Gastrocnemius medialis (tissue), 4 donors: ENCODE measurements at regions of chr21 and their contacts with region 1.

Region 1: DNA sequence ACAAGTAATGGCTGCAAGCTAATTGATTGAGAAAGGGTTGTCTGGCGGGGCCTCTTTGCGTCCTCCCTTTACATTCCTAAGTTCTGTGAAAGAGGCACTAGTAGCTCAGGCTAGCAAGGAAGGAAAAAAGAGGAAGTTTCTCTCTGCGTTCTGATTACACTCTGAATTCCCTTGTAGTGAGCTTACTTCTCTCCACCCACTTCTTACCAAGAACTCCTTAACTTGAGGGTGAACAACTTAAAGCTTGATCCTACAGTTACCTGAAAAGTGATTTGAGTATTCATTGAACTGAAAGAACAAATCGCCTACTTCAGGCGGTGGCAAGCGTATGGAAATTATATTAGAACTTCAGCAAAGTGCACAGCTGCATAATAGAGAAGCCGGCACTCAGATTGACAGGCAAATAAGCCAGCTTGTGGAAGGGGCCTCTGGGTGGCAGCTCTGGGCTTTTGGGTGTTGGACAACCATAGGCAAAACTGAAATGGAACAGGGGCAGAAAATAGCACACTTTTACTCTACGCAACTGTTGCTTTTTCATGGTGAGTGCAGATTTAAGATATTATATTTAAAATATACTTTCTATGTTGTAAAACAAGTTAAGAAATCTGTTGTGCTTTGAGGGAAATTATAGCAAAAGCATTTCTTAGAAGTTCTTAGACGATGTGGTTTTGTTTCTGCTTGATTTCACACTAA is 464.5 kb downstream of the USP25 start:
- DNase-seq: peak; percentile 75 to 80
- ATAC-seq: peak; percentile 88 to 90
- H3K4me3 ChIP-seq: peak overlapping the region; percentile 52 to 63 (median 60)
- H3K27ac ChIP-seq: peak overlapping the region; percentile 83 to 88 (median 84)
- H3K4me1 ChIP-seq: peaks cover 14 to 17% of the 10 kb centered on the region in 2 donors
- H3K27me3 ChIP-seq: no peaks in the 10 kb centered on the region
- CTCF ChIP-seq: peak in 3 of 5 experiments; percentile 17 to 55 (median 44)
- POLR2A ChIP-seq: no peak

Region 2: DNA sequence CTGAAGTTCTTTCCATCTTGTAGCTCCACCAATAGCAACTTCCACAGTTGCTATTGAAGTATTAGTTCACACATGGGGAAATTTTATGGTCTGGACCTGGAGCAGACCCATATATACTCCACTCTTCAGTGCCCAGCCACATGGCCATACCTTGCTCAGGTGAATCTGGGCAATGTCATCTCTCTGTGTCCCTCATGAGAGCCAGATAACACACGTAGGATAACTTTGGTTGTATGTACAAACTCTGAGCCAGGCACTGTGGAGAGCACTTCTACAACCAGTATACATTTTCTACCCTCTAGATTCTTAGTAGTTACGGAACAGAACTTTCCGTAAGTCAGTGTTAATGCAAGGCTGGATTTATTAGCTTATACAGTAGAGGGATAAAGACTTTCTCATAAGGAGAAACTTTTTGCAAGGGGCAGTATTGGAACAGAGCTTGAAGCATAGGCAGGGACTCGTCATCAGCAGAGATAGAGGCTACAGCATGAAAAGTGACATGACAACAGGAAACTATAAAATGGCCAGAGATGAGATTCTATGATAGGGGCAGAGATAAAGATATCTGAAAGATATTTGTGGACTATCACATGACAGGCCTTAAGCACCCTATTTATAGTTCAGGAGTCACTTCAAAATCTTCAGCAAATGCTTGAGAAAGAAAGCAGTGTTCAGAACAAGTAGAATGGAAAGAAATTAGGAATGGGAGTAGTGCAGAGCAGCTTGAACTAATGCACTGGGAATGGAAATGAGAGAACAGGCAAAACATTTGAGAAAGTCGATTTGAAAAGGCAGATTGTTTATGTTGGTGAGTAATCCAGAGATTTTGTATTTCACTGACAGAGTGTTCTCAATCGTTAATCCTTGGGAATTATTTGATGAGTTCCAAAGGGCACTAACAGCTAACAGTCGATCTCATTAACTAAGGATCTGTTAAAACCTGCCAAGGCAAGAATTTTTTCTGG is 17.4 kb after region 1 on chr21:
- in situ Hi-C with region 1: no loop called
- intact Hi-C with region 1: loop called (anchors 2 kb)
- DNase-seq: no peak
- ATAC-seq: peak; percentile 86 to 92
- H3K4me3 ChIP-seq: peak overlapping the region; percentile 39 to 58 (median 48)
- H3K27ac ChIP-seq: peak overlapping the region; percentile 83 to 93 (median 87)
- H3K4me1 ChIP-seq: peaks cover 6 to 34% of the 10 kb centered on the region in 2 donors
- H3K27me3 ChIP-seq: no peaks in the 10 kb centered on the region
- CTCF ChIP-seq: no peak
- POLR2A ChIP-seq: peak in 1 of 2 donors; percentile 60

Region 3: GRCh38 chr21:16279731-16280581 is 85.7 kb after region 1 on chr21:
- in situ Hi-C with region 1: no loop called
- intact Hi-C with region 1: loop called (anchors 5 kb)
- DNase-seq: peak; percentile 30 to 51
- ATAC-seq: peak; percentile 68 to 86
- H3K4me3 ChIP-seq: peak overlapping the region; percentile 49 to 51 (median 50)
- H3K27ac ChIP-seq: peak overlapping the region; percentile 78 to 87 (median 82)
- H3K4me1 ChIP-seq: peaks cover 17 to 25% of the 10 kb centered on the region in 2 donors
- H3K27me3 ChIP-seq: no peaks in the 10 kb centered on the region
- CTCF ChIP-seq: peak in 2 of 5 experiments; percentile 12 to 24
- POLR2A ChIP-seq: no peak

Region 4: DNA sequence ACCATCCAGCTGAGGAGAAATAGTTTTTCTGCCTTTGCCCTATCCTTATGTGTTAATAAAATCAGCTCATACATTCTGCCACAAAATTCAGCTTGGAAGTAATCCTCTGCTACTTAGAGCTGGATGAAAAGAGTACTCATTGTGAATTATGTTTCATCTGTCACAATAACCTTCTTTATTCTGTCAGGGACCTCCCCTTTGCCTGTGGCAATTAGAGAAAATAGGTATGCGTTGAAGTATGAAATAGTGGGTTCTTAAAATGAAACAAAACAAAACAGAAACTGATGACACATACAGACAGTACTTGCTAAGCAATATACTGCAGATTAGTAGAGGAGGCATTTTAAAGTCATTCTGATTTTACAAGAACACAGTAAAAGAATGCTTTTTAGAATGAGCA is 114.0 kb after region 1 on chr21:
- in situ Hi-C with region 1: loop called in 3 of 4 experiments (anchors 5 to 10 kb)
- intact Hi-C with region 1: loop called (anchors 2 kb)
- DNase-seq: no peak
- ATAC-seq: peak in 1 of 2 donors; percentile 37
- H3K4me3 ChIP-seq: peak overlapping the region; percentile 45 to 52 (median 50)
- H3K27ac ChIP-seq: peak overlapping the region; percentile 63 to 85 (median 82)
- H3K4me1 ChIP-seq: peaks cover 5 to 9% of the 10 kb centered on the region in 2 donors
- H3K27me3 ChIP-seq: no peaks in the 10 kb centered on the region
- CTCF ChIP-seq: no peak
- POLR2A ChIP-seq: no peak

Region 5: DNA sequence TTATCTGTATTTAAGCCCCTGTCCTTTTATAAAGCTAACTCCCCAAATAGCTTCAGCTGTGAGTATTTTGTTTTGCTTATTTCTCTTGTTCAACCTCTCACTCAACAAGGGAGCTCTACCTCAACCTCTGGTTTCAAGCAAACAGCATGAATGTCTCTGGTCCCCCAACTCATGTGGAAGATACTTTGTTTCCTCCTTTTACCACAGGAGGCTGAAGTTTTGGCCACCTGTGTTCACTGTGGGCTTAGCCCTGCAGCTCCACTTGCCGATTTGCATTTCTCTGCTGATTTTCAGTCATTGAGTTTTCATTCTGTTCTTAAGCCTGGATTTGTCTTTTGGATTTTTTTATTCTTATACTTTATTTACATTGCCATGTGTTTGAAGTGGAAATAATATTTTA is 148.7 kb after region 1 on chr21:
- in situ Hi-C with region 1: no loop called
- intact Hi-C with region 1: no loop called
- DNase-seq: no peak
- ATAC-seq: no peak
- H3K4me3 ChIP-seq: no peak overlapping the region
- H3K27ac ChIP-seq: no peak overlapping the region
- H3K4me1 ChIP-seq: no peaks in the 10 kb centered on the region
- H3K27me3 ChIP-seq: no peaks in the 10 kb centered on the region
- CTCF ChIP-seq: no peak
- POLR2A ChIP-seq: no peak

Region 6: DNA sequence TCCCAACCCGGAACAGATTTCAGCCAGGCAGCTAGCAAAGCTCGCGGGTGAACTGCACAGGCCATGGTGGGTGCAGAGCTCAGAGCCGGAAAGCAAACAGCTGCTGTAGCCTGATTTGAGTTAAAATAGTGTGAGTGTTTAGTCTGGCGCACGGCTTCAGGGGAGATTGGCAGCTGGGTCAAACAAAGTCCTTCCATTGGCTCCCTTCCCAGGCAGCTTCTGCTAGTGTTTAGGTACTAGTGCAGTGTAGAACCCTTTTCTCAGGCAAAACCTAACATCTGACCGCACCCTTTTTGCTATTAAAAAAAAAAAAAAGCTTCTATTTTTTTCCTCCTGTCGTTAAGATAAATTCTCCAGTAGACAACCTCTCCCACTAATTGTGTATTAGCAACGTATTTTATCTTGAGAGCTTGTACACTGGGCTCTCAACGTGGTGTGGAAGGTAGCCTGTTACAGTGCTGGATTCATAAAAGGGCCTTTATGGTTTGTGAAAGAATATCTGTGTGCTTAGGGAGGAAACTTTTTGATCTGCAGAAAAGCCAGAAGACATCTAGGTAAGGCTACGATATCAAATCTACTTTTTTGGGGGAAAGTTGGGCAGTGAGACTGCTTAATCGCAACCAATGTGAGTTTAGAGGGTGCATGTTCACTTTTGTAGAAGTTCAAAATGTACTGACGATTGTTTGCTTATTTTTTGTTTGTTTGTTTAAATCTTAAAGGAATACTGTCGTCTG is 225.1 kb after region 1 on chr21:
- in situ Hi-C with region 1: loop called in 1 of 4 experiments (anchors 10 kb)
- intact Hi-C with region 1: loop called (anchors 5 kb)
- DNase-seq: peak; percentile 52 to 59
- ATAC-seq: peak; percentile 64 to 66
- H3K4me3 ChIP-seq: peak overlapping the region; percentile 51 to 60 (median 56)
- H3K27ac ChIP-seq: peak overlapping the region; percentile 86 to 91 (median 90)
- H3K4me1 ChIP-seq: peaks cover 4 to 15% of the 10 kb centered on the region in 2 donors
- H3K27me3 ChIP-seq: no peaks in the 10 kb centered on the region
- CTCF ChIP-seq: no peak
- POLR2A ChIP-seq: no peak

Region 7: GRCh38 chr21:16579538-16579937 is 385.3 kb after region 1 on chr21:
- in situ Hi-C with region 1: loop called in 1 of 4 experiments (anchors 25 kb)
- intact Hi-C with region 1: loop called (anchors 10 kb)
- DNase-seq: no peak
- ATAC-seq: no peak
- H3K4me3 ChIP-seq: peak overlapping the region in 2 of 4 donors; percentile 10 to 35
- H3K27ac ChIP-seq: peak overlapping the region; percentile 2 to 52 (median 48)
- H3K4me1 ChIP-seq: peaks cover 14 to 32% of the 10 kb centered on the region in 2 donors
- H3K27me3 ChIP-seq: no peaks in the 10 kb centered on the region
- CTCF ChIP-seq: no peak
- POLR2A ChIP-seq: no peak